ENCODE measurements at regions of chr15 and their contacts with region 1.

Region 1: DNA sequence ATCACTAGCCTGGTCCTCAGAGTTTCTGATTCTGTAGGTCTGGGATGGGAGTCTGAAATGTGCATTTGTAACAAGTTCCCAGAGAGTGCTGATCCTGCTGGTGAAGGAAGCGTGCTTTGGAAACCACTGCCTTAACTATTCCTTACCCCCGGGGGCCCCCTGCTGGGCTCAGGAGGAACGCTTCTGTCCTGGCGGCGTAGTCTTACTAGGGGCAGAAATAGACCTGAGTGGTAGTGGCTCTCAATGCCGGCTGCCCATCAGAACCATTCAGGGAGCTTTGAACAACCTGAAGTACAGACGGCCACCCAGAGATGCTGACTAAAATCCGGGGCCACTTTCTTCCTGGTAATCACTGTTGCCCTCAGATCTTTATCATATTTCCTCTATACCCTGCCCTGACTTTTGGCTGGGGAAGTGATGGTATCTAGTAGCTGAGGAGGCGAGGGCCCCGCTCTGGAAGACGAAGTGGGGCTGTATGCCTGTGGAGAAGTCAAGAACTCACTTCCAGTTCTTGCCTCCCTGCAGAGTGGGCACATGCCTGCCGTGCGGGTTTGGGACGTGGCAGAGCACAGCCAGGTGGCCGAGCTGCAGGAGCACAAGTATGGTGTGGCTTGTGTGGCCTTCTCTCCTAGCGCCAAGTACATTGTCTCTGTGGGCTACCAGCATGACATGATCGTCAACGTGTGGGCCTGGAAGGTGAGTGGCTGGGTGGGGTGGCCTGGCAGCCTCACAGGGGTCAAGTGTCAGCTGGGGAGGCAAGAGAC is 16.3 kb upstream of the JMJD7 start:
- DNase-seq: peak; percentile 93
- H3K4me3 ChIP-seq: no peak overlapping the region
- H3K27ac ChIP-seq: no peak overlapping the region
- H3K4me1 ChIP-seq: peaks cover 0 to 27% (median 9%) of the 10 kb centered on the region in 6 donors
- H3K27me3 ChIP-seq: no peaks in the 10 kb centered on the region
- CTCF ChIP-seq: peak; percentile 78 to 95 (median 90)
- POLR2A ChIP-seq: no peak

Region 2: DNA sequence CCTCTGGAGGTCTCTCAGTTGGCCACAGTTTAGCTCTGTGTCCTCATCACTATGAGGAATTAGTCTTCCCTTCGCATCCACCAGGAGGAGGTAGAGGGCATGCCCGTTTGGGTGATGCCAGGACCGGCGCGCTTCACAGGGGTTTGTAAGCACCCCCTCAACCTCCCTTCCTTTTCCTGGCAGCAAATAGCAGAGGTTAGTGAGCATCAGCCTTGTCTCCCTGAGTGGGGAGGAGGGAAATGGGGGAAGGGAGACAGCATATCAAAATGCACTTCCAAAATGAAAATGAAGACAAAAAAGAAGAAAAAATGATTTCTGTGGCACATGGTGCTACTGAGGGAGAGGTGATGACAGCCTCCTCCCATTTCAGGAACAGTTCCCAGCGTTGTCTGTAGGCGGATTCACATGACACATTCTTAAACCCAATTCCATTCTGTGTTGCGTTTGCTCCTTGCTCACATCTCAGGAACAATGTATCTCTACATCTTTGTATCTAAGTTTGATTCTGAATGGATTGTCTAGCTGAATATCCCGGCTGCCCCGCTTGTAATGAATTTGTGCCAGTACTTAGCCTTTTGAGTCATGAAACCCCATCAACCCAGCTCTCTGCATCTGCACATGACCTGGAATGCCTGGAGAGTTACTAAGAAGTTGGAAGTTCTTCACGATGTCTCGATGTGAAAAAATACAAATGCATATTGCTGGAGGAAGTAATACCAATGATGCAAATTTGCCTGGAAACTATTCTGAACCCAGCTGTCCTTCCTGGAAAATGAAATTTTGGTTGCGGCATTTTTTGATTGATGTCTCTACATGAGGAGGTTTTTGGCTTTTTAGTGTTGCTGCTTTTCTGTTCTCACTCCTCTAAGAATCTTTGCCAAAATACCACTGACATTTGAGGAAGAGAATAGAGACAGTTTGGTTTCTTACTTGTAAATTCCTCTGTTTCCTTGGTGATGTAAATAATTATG is 207.4 kb before region 1 on chr15:
- intact Hi-C with region 1: loop called (anchors 5 kb)
- DNase-seq: peak; percentile 82
- H3K4me3 ChIP-seq: peak overlapping the region in 3 of 8 donors; percentile 11 to 55 (median 18)
- H3K27ac ChIP-seq: peak overlapping the region in 1 of 8 donors; percentile 7
- H3K4me1 ChIP-seq: peaks cover 0 to 17% (median 13%) of the 10 kb centered on the region in 6 donors
- H3K27me3 ChIP-seq: no peaks in the 10 kb centered on the region
- CTCF ChIP-seq: peak; percentile 50 to 77 (median 70)
- POLR2A ChIP-seq: no peak

Region 3: DNA sequence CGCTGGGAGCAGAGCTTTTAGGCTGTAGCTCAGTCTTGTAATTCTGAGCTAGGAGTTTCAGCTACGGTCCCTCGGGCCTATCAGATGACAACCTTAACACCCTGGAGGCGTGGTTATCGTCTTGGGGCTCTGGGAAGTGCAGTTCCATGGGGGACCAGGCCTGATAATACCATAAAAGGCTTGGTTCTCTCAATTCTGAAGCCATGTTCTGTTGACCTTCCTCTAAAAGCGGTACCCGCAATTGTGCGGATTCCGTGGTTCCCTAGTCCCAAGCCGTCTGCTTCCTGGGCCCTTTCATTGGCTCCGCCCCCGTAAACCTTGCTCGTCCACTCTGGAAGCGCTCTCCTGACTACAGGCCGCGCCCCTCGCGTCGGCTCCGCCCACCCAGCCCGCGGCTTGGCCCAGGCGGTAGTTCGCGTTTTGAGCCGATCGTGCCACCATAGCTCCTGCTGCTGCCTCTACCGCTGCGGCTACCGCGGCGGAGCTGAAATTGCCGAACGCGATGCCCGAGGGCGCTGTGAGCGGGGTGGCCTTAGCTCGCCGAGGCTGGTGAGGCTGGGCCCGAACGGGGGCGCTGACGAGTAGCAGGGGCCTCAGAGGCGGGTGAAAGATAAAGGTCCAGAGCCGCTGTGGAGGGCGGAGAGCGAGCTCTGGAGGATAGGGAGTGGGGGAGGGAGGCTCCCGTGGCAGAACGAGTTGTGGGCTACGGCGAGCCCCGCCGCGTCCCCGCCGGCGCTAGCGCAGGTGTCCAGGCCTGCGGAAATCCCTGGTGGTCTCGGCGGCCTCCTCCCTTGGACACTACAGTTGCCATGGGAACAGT is 37.3 kb before region 1 on chr15 and contains the start of gene MAPKBP1:
- intact Hi-C with region 1: loop called (anchors 2 kb)
- DNase-seq: peak; percentile 100
- H3K4me3 ChIP-seq: peak within 1 kb of the TSS; percentile 66 to 86 (median 80)
- H3K27ac ChIP-seq: peak within 1 kb of the TSS; percentile 72 to 93 (median 90)
- H3K4me1 ChIP-seq: peaks cover 30 to 61% (median 55%) of the 10 kb centered on the region in 6 donors
- H3K27me3 ChIP-seq: no peaks in the 10 kb centered on the region
- CTCF ChIP-seq: peak in 10 of 11 experiments; percentile 51 to 85 (median 77)
- POLR2A ChIP-seq: peak in 2 of 3 donors; percentile 31 to 54
- total RNA-seq, gene MAPKBP1: 19.9 to 44.5 (median 37.4) TPM

Measured in spleen (tissue), 13 donors.